Activated CD4-positive, alpha-beta T cell treated with anti-CD3 and anti-CD28 coated beads, Interleukin-2, amount 10 ng/mL, durations not matched to agents 7 days and 5 days (primary cell): ENCODE measurements at regions of chr13 and their contacts with region 1.

Region 1: DNA sequence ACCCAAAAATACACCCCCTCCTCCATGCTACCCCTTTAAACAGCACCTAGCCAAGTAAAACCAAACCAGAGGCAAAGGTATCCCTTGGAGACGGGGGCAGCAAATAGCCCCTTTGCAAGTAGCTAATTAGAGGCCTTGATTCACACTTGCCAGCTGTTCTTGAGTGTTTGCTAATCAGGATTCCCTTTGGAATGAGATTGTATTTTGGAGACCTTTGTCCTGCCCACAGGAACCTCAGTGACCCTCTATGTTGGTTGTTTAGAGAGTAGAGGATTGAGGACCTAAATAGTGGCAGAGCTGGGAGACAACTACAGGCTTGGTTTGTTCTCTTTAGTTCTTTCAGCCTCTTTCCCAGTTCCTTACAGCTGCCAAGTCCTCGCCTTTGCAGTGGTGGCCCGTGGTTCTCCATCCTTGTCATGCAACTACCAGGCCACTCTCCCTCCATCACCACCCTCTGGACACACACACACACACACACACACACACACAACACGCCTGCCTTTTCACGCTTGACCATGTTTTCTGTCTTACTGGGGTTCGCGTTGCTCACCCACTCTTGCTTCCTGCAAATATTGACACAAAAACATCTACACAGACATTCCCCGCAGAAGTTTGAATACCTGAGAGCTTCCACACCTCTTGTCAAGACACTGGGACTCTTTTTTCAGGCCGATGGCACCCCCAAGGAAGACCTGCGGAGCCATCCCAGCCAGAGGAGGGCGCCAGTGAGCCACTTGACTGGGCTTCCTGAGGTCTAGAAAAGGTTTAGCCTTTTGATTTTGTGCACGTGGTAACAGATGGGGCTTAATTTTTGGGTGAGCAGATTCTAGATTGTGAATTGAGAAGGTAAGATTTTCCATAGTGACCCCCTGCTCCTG is 80.0 kb upstream of the GPR183 start:
- DNase-seq: peak; percentile 84
- H3K4me3 Mint-ChIP-seq: no peak overlapping the region
- H3K27ac Mint-ChIP-seq: peak overlapping the region; percentile 73
- H3K4me1 Mint-ChIP-seq: peaks cover 64% of the 10 kb centered on the region
- H3K27me3 Mint-ChIP-seq: no peaks in the 10 kb centered on the region

Region 2: DNA sequence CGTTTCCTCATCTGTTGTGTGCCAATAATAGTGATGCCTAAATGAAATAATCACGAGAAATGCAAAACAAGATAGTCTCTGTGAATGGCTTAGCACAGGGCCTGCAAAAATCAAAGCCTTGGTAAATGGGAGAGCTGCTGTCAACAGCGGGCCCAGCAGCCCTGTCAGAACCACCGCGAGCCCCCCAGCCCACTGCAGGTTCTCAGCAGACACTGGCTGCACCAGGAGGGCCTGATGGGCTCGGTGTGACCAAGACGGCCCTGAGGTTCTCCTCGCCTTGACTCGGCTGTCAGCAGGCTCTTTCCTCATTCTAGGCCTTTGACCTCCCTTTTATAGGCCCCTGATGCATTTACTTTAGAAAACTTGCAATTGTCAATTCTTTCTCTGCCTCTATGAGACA is 10.9 kb after region 1 on chr13:
- CTCF ChIA-PET with region 1: interaction called, 12 read pairs
- POLR2A ChIA-PET with region 1: no interaction called
- DNase-seq: no peak
- H3K4me3 Mint-ChIP-seq: no peak overlapping the region
- H3K27ac Mint-ChIP-seq: no peak overlapping the region
- H3K4me1 Mint-ChIP-seq: peaks cover 19% of the 10 kb centered on the region
- H3K27me3 Mint-ChIP-seq: no peaks in the 10 kb centered on the region

Region 3: GRCh38 chr13:99425485-99426341 is 38.6 kb after region 1 on chr13:
- CTCF ChIA-PET with region 1: interaction called, 12 read pairs
- POLR2A ChIA-PET with region 1: no interaction called
- DNase-seq: peak; percentile 69
- H3K4me3 Mint-ChIP-seq: peak overlapping the region; percentile 41
- H3K27ac Mint-ChIP-seq: peak overlapping the region; percentile 87
- H3K4me1 Mint-ChIP-seq: peaks cover 56% of the 10 kb centered on the region
- H3K27me3 Mint-ChIP-seq: no peaks in the 10 kb centered on the region

Region 4: DNA sequence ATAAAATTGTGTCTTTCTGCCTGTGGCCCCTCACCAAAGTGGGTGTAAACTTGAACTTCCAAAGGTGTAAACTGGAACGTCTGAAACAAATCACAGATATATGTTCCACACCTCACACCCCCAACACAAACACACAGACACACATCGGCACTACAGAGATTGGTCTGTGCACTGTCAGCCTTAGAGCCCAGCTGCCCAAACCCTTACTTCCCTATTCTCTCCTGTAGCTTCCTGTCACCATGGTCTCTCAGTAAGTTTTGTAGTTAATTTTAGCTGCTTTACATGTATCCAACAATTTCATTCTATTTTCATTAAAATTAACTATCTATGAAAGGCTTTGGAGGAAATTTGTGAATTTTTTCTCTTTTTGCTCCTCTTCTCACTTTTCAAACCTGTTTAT is 119.5 kb after region 1 on chr13:
- CTCF ChIA-PET with region 1: no interaction called
- POLR2A ChIA-PET with region 1: no interaction called
- DNase-seq: no peak
- H3K4me3 Mint-ChIP-seq: no peak overlapping the region
- H3K27ac Mint-ChIP-seq: peak overlapping the region; percentile 65
- H3K4me1 Mint-ChIP-seq: peaks cover 68% of the 10 kb centered on the region
- H3K27me3 Mint-ChIP-seq: no peaks in the 10 kb centered on the region

Region 5: GRCh38 chr13:100019780-100020356 is 632.7 kb after region 1 on chr13:
- CTCF ChIA-PET with region 1: no interaction called
- POLR2A ChIA-PET with region 1: no interaction called
- DNase-seq: no peak
- H3K4me3 Mint-ChIP-seq: no peak overlapping the region
- H3K27ac Mint-ChIP-seq: no peak overlapping the region
- H3K4me1 Mint-ChIP-seq: no peaks in the 10 kb centered on the region
- H3K27me3 Mint-ChIP-seq: peaks cover 3% of the 10 kb centered on the region